ENCODE measurements at regions of chr4 and their contacts with region 1.

Region 1: GRCh38 chr4:68175562-68176155 is 46.0 kb upstream of the TMPRSS11F start:
- DNase-seq: peak in 1 of 6 donors; percentile 29
- ATAC-seq: peak in 3 of 4 donors; percentile 62 to 72 (median 67)
- H3K4me3 ChIP-seq: no peak overlapping the region
- H3K27ac ChIP-seq: no peak overlapping the region
- H3K4me1 ChIP-seq: no peaks in the 10 kb centered on the region
- H3K27me3 ChIP-seq: no peaks in the 10 kb centered on the region
- CTCF ChIP-seq: peak in 2 of 4 donors; percentile 31 to 38

Region 2: GRCh38 chr4:67871867-67872266 is 303.8 kb before region 1 on chr4:
- intact Hi-C with region 1: loop called in 1 of 3 experiments (anchors 10 kb)
- DNase-seq: no peak
- ATAC-seq: peak in 3 of 4 donors; percentile 70 to 80 (median 79)
- H3K4me3 ChIP-seq: no peak overlapping the region
- H3K27ac ChIP-seq: no peak overlapping the region
- H3K4me1 ChIP-seq: no peaks in the 10 kb centered on the region
- H3K27me3 ChIP-seq: no peaks in the 10 kb centered on the region
- CTCF ChIP-seq: peak in 3 of 4 donors; percentile 13 to 28 (median 23)